H1 (cell line): ENCODE measurements at regions of chr5 and their contacts with region 1.

Region 1: GRCh38 chr5:168390491-168390890 is 95.8 kb upstream of the RARS1 start:
- DNase-seq: no peak
- H3K4me3 ChIP-seq: no peak overlapping the region
- H3K27ac ChIP-seq: no peak overlapping the region
- H3K4me1 ChIP-seq: no peaks in the 10 kb centered on the region
- H3K27me3 ChIP-seq: no peaks in the 10 kb centered on the region
- CTCF ChIP-seq: no peak
- EP300 ChIP-seq: no peak
- POLR2A ChIP-seq: no peak
- RAD21 ChIP-seq: no peak

Region 2: DNA sequence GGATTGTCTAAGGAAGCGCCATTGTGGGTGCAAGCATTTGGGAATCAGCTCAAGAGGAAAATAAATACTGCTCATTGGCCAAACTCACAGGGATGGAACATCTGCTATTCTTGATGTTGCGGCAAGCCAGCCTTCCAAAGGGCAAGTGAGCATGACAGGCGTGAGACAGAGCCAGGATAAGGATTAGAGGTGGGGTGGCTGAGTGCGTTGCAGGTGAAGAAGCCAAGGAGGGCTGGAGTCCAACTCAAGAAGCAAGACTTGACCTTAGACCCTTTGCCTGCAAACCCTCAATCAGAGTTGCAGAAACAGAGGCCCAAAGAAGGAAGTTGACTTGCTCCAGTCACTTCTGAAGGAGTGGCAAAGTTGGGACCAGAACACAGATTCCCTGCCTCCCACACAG is 19.7 kb before region 1 on chr5:
- CTCF ChIA-PET with region 1: interaction called, 12 read pairs
- POLR2A ChIA-PET with region 1: interaction called, 3 read pairs
- DNase-seq: no peak
- H3K4me3 ChIP-seq: no peak overlapping the region
- H3K27ac ChIP-seq: no peak overlapping the region
- H3K4me1 ChIP-seq: peaks cover under 1 to 4% (median 2%) of the 10 kb centered on the region in 4 experiments
- H3K27me3 ChIP-seq: no peaks in the 10 kb centered on the region
- CTCF ChIP-seq: no peak
- EP300 ChIP-seq: no peak
- POLR2A ChIP-seq: no peak
- RAD21 ChIP-seq: no peak

Region 3: DNA sequence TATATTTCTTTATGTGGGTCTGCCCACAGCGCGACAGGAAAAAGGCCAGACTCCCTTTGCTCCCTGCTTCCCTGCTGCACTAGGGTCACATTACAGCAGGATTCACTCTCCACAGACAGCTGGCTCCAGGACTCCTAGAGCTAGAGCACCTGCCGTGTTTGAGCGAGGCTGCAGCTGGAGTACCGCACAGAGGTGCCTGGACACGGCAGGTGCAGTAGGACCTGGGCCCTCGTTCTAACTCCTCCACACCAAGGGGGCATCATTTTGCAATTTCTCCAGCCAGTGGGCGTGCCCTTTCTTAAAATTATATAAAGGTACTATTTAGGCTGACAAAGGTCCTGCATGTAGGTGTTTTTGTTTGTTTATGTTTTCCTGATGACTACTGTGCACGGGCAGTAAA is 64.0 kb after region 1 on chr5:
- CTCF ChIA-PET with region 1: no interaction called
- POLR2A ChIA-PET with region 1: no interaction called
- DNase-seq: no peak
- H3K4me3 ChIP-seq: no peak overlapping the region
- H3K27ac ChIP-seq: no peak overlapping the region
- H3K4me1 ChIP-seq: no peaks in the 10 kb centered on the region; a peak in 1 of 7 replicates
- H3K27me3 ChIP-seq: no peaks in the 10 kb centered on the region
- CTCF ChIP-seq: no peak
- EP300 ChIP-seq: no peak
- POLR2A ChIP-seq: no peak
- RAD21 ChIP-seq: no peak